Activated CD4-positive, alpha-beta memory T cell treated with anti-CD3 and anti-CD28 coated beads for 36 hours (primary cell): ENCODE measurements at regions of chr4 and their contacts with region 1.

Region 1: DNA sequence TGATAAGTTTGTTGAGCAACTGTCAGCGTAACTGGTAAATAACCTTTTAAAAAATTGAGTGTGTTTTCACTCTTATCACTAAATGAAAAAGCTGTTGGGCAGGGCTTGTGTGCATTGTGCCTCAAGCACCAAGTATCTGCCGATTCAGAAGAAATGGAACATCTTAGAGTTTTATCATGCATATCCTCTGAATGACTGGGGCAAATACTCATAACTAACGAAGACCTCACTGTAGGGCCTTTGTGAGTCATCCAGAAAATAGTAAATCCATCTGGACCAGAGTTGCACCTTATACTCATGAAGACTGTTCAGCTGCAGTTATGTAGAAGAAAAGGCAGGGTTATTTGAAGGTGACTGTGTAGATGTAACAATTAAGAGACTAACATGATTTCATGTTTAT is 222.1 kb downstream of the CAMK2D start:
- DNase-seq: peak; percentile 46
- H3K4me3 Mint-ChIP-seq: no peak overlapping the region
- H3K27ac Mint-ChIP-seq: peak overlapping the region; percentile 65
- H3K4me1 Mint-ChIP-seq: peaks cover 38% of the 10 kb centered on the region
- H3K27me3 Mint-ChIP-seq: no peaks in the 10 kb centered on the region

Region 2: DNA sequence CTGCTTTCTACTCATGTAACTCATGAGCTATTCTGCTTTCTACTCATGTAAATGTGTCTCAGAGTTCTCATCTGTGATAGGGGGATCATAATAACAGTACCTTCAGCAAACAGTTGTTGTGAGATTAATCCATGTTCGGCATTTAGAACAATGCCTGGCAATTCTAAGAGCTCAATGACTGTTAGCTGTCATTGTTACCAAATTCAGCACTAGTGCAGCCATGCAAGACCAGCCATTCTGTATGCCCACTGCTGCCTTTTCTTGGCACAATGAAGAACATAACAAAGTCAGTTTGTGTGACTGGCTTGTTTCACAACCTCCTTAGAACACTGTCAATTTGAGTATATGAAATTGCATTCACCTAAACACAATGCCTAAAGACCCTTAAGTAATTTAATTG is 326.8 kb before region 1 on chr4:
- CTCF ChIA-PET with region 1: no interaction called
- POLR2A ChIA-PET with region 1: no interaction called
- intact Hi-C with region 1: no loop called
- DNase-seq: no peak
- H3K4me3 Mint-ChIP-seq: no peak overlapping the region
- H3K27ac Mint-ChIP-seq: no peak overlapping the region
- H3K4me1 Mint-ChIP-seq: no peaks in the 10 kb centered on the region
- H3K27me3 Mint-ChIP-seq: no peaks in the 10 kb centered on the region

Region 3: GRCh38 chr4:113383111-113383785 is 156.2 kb before region 1 on chr4:
- CTCF ChIA-PET with region 1: no interaction called
- POLR2A ChIA-PET with region 1: no interaction called
- intact Hi-C with region 1: loop called (anchors 1 kb)
- DNase-seq: no peak
- H3K4me3 Mint-ChIP-seq: no peak overlapping the region
- H3K27ac Mint-ChIP-seq: no peak overlapping the region
- H3K4me1 Mint-ChIP-seq: peaks cover 15% of the 10 kb centered on the region
- H3K27me3 Mint-ChIP-seq: peaks cover 9% of the 10 kb centered on the region

Region 4: GRCh38 chr4:113445286-113445685 is 94.1 kb before region 1 on chr4:
- CTCF ChIA-PET with region 1: no interaction called
- POLR2A ChIA-PET with region 1: no interaction called
- intact Hi-C with region 1: loop called (anchors 1 kb)
- DNase-seq: peak; percentile 19
- H3K4me3 Mint-ChIP-seq: no peak overlapping the region
- H3K27ac Mint-ChIP-seq: peak overlapping the region; percentile 64
- H3K4me1 Mint-ChIP-seq: peaks cover 26% of the 10 kb centered on the region
- H3K27me3 Mint-ChIP-seq: no peaks in the 10 kb centered on the region

Region 5: DNA sequence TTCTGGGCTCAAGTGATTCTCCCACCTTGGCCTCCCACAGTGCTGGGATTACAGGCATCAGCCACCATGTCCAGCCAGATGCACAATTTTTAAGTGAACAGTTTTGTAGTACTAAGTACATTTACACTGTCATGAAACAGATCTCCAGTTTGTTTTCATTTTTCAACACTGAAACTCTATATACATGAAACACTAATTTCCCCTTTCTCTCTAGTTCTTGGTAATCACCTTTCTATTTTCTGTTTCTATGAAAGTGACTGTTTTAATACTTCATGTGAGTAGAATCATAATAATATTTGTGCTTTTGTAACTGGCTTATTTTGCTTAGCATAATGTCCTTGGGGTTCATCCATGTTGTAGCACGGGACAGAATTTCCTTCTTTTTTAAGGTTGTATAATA is 15.3 kb before region 1 on chr4:
- CTCF ChIA-PET with region 1: no interaction called
- POLR2A ChIA-PET with region 1: interaction called, 3 read pairs
- intact Hi-C with region 1: loop called (anchors 1 kb)
- DNase-seq: no peak
- H3K4me3 Mint-ChIP-seq: no peak overlapping the region
- H3K27ac Mint-ChIP-seq: no peak overlapping the region
- H3K4me1 Mint-ChIP-seq: peaks cover 13% of the 10 kb centered on the region
- H3K27me3 Mint-ChIP-seq: no peaks in the 10 kb centered on the region

Region 6: GRCh38 chr4:113732967-113733527 is 193.6 kb after region 1 on chr4:
- CTCF ChIA-PET with region 1: no interaction called
- POLR2A ChIA-PET with region 1: no interaction called
- intact Hi-C with region 1: loop called (anchors 1 kb)
- DNase-seq: no peak
- H3K4me3 Mint-ChIP-seq: peak overlapping the region; percentile 0
- H3K27ac Mint-ChIP-seq: peak overlapping the region; percentile 26
- H3K4me1 Mint-ChIP-seq: peaks cover 62% of the 10 kb centered on the region
- H3K27me3 Mint-ChIP-seq: no peaks in the 10 kb centered on the region